ENCODE measurements at regions of chr21 and their contacts with region 1.

Region 1: GRCh38 chr21:17611414-17612022 is 1.2 kb downstream of the BTG3 start:
- DNase-seq: peak; percentile 76
- CTCF ChIP-seq: no peak

Region 2: DNA sequence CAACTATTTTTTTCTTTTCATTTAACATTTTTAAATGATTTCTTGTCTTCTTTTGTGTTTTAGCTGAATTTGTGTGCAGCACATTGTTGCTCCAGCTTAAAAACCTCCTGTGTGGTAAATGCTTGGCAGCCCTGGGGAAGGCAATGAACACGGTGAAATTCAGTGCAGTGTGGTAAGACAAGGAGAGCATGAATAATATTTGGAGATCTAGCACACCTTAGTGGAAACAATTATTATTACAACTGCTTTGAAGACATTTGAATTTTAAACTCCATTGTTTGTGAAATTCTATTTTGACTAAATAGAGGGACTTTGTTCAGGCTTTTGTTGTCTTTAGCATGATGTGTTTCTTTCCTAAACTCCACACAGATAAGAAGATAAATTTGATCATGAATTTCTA is 341.3 kb before region 1 on chr21:
- in situ Hi-C with region 1: no loop called
- DNase-seq: peak; percentile 4
- CTCF ChIP-seq: no peak

Region 3: DNA sequence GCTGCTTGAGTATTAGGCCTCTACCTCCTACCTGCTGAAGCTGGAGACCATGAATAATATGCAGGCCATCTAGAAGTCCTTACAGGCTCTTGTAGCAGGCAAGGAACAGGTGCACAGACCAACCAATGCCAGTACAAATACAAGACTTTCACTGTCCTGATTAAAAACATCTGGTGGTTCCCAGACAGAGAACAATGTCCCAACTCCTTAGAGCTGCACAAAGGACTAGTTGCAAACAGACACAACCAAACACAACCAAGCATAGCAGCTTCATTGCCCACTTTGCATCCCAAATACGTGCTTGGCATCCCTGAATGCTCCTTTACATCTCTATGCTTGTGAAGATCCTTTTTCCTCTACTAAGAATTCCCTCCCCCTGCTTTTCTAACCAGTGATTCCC is 196.8 kb before region 1 on chr21:
- in situ Hi-C with region 1: no loop called
- DNase-seq: no peak
- CTCF ChIP-seq: no peak

Region 4: GRCh38 chr21:17570786-17571185 is 40.7 kb before region 1 on chr21:
- in situ Hi-C with region 1: no loop called
- DNase-seq: no peak
- CTCF ChIP-seq: no peak

Region 5: DNA sequence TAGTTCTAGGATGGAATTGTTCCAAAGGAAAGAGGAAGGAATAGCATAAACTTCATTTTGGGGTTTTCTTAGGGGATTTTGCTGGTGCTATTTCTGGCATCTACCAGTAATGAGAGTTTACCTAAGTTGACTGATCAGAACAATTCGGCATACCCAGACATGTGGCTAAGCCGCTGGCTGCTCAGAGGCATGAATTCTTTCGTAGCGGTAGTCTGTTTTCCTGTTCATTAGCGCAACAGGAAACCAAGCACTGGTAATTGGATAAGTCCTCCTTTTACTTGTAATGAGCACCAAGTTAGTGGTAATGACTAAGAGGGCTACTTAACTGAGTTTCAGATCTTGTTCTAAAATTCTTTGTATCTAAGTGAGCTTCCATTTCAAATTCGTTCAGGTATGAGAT is 169.0 kb after region 1 on chr21:
- in situ Hi-C with region 1: loop called (anchors 10 kb)
- DNase-seq: peak; percentile 29
- CTCF ChIP-seq: no peak

Measured in GM13976 (cell line).